ENCODE measurements at regions of chr13 and their contacts with region 1.

Region 1: GRCh38 chr13:91280801-91281200 is 66.7 kb upstream of the MIR17HG start:
- DNase-seq: no peak
- ATAC-seq: no peak
- H3K4me3 ChIP-seq: no peak overlapping the region
- H3K27ac ChIP-seq: no peak overlapping the region
- H3K4me1 ChIP-seq: no peaks in the 10 kb centered on the region
- H3K27me3 ChIP-seq: peaks cover 0 to 3% (median 0%) of the 10 kb centered on the region in 3 donors
- CTCF ChIP-seq: no peak

Region 2: GRCh38 chr13:91196958-91197357 is 83.8 kb before region 1 on chr13:
- intact Hi-C with region 1: no loop called
- DNase-seq: no peak
- ATAC-seq: no peak
- H3K4me3 ChIP-seq: no peak overlapping the region
- H3K27ac ChIP-seq: no peak overlapping the region
- H3K4me1 ChIP-seq: no peaks in the 10 kb centered on the region
- H3K27me3 ChIP-seq: no peaks in the 10 kb centered on the region
- CTCF ChIP-seq: no peak

Region 3: GRCh38 chr13:92510416-92510815 is 1229.6 kb after region 1 on chr13:
- intact Hi-C with region 1: loop called in 1 of 2 experiments (anchors 5 kb)
- DNase-seq: no peak
- ATAC-seq: no peak
- H3K4me3 ChIP-seq: no peak overlapping the region
- H3K27ac ChIP-seq: no peak overlapping the region
- H3K4me1 ChIP-seq: no peaks in the 10 kb centered on the region
- H3K27me3 ChIP-seq: no peaks in the 10 kb centered on the region
- CTCF ChIP-seq: no peak

Measured in psoas muscle (tissue), 8 donors.